Tibial artery (tissue), 4 donors: ENCODE measurements at regions of chr10 and their contacts with region 1.

Region 1: DNA sequence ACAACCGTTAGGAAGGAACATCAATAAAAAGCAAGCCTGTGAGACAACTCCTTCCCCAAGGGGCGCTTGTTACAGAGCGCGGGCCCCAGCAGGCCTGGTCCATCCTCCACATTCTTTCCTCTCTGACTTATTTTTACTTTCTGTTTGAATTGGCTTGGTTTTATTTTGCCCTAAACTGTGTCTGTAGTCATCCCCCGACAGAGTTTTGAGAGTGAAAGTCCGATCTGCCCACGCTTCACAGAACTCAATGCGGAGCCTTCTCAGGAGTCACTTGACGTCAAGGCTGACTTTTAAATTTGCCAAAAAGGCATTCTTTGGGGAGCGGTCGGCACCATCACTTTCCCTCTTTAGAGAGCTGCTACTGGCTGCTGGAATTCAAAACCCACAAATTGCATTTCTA is 150.1 kb upstream of the KLF6 start:
- DNase-seq: peak; percentile 57 to 79
- H3K4me3 ChIP-seq: peak overlapping the region; percentile 33 to 39
- H3K27ac ChIP-seq: peak overlapping the region; percentile 81 to 82
- H3K4me1 ChIP-seq: peaks cover 0 to 26% (median 13%) of the 10 kb centered on the region in 4 donors
- H3K27me3 ChIP-seq: no peaks in the 10 kb centered on the region
- CTCF ChIP-seq: no peak

Region 2: DNA sequence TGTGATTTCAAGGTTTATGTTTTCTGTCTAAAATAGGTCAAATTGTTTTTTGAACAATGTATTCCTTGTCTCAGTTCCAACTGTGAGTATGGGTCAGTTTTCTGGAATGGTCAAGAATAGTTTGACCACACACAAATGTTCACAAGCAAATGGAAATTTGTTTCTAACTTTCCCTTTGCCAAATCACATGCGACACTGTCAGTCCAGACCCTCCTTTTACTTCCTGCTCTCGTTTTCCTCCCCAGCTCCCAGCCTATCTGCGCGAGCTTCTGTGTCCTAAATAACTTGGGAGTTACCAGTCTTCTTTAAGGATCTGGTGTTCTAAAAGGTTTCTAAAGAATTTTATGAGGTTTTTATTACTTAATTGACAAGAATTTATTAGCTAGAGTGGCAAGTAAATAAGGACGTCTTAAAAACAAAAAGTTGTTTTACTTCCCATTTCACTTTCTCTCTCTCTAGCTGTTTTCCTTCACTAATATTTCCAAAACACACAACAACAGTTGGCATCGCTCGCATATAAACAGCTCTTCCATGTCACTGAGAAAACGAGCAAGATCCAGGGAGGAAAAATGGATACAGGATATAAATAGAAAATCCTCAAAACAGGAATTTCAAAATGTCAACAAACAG is 116.0 kb after region 1 on chr10:
- intact Hi-C with region 1: loop called (anchors 10 kb)
- DNase-seq: peak; percentile 81 to 83
- H3K4me3 ChIP-seq: peak overlapping the region; percentile 39 to 41
- H3K27ac ChIP-seq: peak overlapping the region; percentile 86 to 91
- H3K4me1 ChIP-seq: peaks cover 0 to 60% (median 28%) of the 10 kb centered on the region in 4 donors
- H3K27me3 ChIP-seq: no peaks in the 10 kb centered on the region
- CTCF ChIP-seq: no peak

Region 3: GRCh38 chr10:4081685-4082111 is 146.6 kb after region 1 on chr10:
- intact Hi-C with region 1: no loop called
- DNase-seq: peak in 1 of 2 donors; percentile 62
- H3K4me3 ChIP-seq: no peak overlapping the region
- H3K27ac ChIP-seq: peak overlapping the region; percentile 37 to 61
- H3K4me1 ChIP-seq: peaks cover 0 to 43% (median 22%) of the 10 kb centered on the region in 4 donors
- H3K27me3 ChIP-seq: no peaks in the 10 kb centered on the region
- CTCF ChIP-seq: no peak